PC-9 (cell line): ENCODE measurements at regions of chr1 and their contacts with region 1.

Region 1: GRCh38 chr1:161884475-161884874 is 118.4 kb downstream of the ATF6 start:
- DNase-seq: no peak
- H3K4me3 ChIP-seq: no peak overlapping the region
- H3K27ac ChIP-seq: no peak overlapping the region
- H3K4me1 ChIP-seq: no peaks in the 10 kb centered on the region
- H3K27me3 ChIP-seq: no peaks in the 10 kb centered on the region
- CTCF ChIP-seq: no peak

Region 2: DNA sequence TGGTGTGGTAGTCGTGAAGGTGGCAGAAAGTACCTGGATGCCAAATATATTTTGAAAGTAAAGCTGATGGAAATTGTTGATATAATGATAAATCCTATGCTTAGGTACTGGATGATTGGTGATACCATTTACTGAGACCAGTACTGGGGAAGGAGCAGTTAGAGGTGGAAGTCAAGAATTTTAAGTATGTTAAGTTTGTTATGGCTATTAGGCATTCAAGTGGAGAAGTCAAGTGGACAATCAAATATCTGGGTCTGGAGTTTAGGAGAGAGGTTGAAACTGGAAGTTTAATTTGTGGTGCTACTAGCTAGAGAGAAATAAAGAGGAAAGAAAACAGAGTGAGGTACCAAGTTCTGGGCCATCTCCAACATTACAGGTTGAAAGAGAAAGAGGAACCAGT is 29.2 kb before region 1 on chr1:
- CTCF ChIA-PET with region 1: no interaction called
- POLR2A ChIA-PET with region 1: interaction called, 11 read pairs
- intact Hi-C with region 1: no loop called
- DNase-seq: no peak
- H3K4me3 ChIP-seq: no peak overlapping the region
- H3K27ac ChIP-seq: no peak overlapping the region
- H3K4me1 ChIP-seq: no peaks in the 10 kb centered on the region
- H3K27me3 ChIP-seq: no peaks in the 10 kb centered on the region
- CTCF ChIP-seq: no peak